Activated naive CD4-positive, alpha-beta T cell treated with anti-CD3 and anti-CD28 coated beads for 36 hours (primary cell): ENCODE measurements at regions of chr17 and their contacts with region 1.

Region 1: DNA sequence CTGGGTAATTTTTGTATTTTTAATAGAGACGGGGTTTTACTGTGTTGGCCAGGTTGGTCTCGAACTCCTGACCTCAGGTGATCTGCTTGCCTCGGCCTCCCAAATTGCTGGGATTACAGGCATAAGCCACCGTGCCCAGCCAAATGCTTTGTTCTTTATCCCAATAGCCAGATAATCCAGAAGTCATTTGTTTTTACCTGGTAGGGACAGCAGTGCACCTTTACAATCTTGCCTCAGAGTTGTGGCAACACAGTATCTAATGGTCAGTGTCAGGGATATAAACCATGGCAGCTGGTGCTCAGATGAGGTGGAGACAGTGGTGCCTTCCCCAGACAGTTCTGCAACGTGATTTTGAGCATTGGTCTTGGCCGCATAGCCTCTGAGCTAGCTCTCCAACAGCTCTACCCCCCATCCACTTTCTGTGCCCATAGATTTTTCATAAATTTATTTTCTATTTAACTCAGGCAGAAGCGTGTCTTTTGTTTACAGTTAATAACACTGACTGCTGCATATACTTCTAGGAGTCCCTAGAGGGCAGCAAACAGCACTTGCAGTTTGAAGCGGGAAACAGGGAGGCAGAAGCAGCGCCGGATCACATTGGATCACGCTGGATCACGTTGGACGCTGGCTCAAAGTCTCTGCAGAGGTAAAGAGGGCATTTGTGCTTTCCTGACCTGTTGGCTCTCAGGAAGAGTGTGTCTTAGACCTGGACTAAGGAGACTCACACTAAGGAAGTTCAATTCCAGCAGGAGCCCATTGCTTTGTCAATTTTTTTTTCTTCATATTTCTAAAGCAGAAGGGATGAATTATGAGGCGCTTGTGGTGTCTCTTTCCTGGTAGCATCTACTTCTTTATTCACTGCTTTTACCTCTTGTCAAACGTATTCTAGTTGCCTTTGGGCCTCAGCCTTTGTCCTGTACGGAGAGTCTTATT is 5.1 kb upstream of the GGT6 start:
- DNase-seq: peak; percentile 76
- H3K4me3 Mint-ChIP-seq: no peak overlapping the region
- H3K27ac Mint-ChIP-seq: no peak overlapping the region
- H3K4me1 Mint-ChIP-seq: peaks cover 31% of the 10 kb centered on the region
- H3K27me3 Mint-ChIP-seq: no peaks in the 10 kb centered on the region

Region 2: DNA sequence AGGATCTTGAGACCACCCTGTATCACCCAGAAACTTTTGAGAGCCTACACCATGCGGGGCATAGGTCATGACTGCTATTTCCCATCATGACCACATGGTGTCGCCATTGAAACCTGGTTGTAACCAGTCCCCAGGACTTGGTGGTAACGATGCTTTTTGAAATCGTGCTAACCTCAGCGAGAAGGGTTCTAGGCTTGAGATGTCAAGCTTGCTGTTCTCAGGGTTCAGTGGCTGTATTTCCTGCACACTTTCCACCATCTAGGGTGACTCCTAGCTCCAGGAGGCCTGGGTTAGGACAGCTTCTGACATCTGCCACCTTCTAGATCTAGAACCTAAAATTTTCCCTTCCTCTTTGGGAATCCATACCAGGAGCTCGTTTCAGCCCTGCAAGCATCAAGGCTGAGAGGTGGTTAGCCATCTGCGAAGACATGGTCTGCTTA is 144.8 kb before region 1 on chr17:
- CTCF ChIA-PET with region 1: interaction called, 5 read pairs
- intact Hi-C with region 1: loop called (anchors 1 kb)
- DNase-seq: peak; percentile 78
- H3K4me3 Mint-ChIP-seq: no peak overlapping the region
- H3K27ac Mint-ChIP-seq: no peak overlapping the region
- H3K4me1 Mint-ChIP-seq: peaks cover 3% of the 10 kb centered on the region
- H3K27me3 Mint-ChIP-seq: no peaks in the 10 kb centered on the region

Region 3: DNA sequence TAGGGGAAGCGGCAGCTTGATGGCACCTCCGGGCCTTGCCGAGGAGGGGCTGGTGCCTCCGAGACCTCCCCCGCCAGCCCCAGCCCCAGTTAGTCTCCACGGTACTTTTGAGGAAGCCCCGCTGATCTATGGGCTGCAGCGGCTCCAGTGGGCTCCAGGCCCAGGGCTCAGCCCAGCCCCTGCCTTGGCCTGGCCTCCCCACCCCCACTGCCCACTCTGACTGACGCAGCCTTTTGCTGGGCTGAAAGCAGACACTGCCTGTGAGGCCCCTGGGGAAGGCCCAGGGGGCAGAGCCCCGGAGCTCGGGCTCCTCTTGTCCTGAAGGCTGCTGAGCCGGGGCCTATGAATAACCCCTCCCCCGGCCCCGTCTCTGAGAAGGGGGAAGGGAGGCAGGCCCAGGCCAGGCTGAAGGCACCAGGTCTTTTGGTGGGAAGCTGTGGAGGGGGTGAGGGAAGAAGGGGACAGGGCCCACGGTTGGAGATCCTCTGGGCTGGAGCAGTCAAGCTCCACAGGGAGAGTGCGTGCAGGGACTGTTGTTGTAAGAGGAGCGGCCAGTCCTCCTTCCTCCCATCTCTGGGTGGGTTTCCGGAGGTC is 11.4 kb after region 1 on chr17:
- CTCF ChIA-PET with region 1: interaction called, 14 read pairs
- intact Hi-C with region 1: no loop called
- DNase-seq: no peak
- H3K4me3 Mint-ChIP-seq: no peak overlapping the region
- H3K27ac Mint-ChIP-seq: no peak overlapping the region
- H3K4me1 Mint-ChIP-seq: peaks cover 15% of the 10 kb centered on the region
- H3K27me3 Mint-ChIP-seq: no peaks in the 10 kb centered on the region

Region 4: DNA sequence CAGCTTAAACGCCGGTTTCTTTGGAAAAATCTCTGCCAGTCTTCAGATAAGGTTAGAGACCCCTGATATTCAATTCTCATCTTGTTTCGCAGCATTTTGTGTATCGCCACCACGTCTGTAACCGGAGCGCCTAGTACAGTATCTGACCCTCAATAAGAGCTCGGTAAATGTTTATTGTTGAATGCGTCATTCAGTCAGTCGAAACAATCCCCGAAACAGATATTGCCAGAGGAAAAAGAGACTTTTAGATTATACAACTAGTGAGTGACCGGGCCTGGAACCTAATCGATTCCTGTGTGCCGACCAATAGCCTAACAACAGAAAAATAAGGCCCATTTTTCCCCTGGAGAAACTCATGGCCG is 137.8 kb after region 1 on chr17:
- CTCF ChIA-PET with region 1: no interaction called
- intact Hi-C with region 1: loop called (anchors 2 kb)
- DNase-seq: no peak
- H3K4me3 Mint-ChIP-seq: peak overlapping the region; percentile 93
- H3K27ac Mint-ChIP-seq: peak overlapping the region; percentile 96
- H3K4me1 Mint-ChIP-seq: peaks cover 49% of the 10 kb centered on the region
- H3K27me3 Mint-ChIP-seq: no peaks in the 10 kb centered on the region

Region 5: GRCh38 chr17:4891411-4892342 is 326.2 kb after region 1 on chr17:
- CTCF ChIA-PET with region 1: interaction called, 4 read pairs
- intact Hi-C with region 1: loop called (anchors 2 kb)
- DNase-seq: no peak
- H3K4me3 Mint-ChIP-seq: no peak overlapping the region
- H3K27ac Mint-ChIP-seq: no peak overlapping the region
- H3K4me1 Mint-ChIP-seq: no peaks in the 10 kb centered on the region
- H3K27me3 Mint-ChIP-seq: no peaks in the 10 kb centered on the region